A673 (cell line): ENCODE measurements at regions of chr3 and their contacts with region 1.

Region 1: GRCh38 chr3:185724251-185724650 is 100.6 kb downstream of the IGF2BP2 start:
- DNase-seq: no peak
- H3K4me3 ChIP-seq: no peak overlapping the region
- H3K27ac ChIP-seq: no peak overlapping the region
- H3K4me1 ChIP-seq: peaks cover 17% of the 10 kb centered on the region
- H3K27me3 ChIP-seq: no peaks in the 10 kb centered on the region
- CTCF ChIP-seq: no peak

Region 2: GRCh38 chr3:185200635-185201034 is 523.6 kb before region 1 on chr3:
- CTCF ChIA-PET with region 1: no interaction called
- POLR2A ChIA-PET with region 1: no interaction called
- intact Hi-C with region 1: no loop called
- DNase-seq: peak; percentile 27
- H3K4me3 ChIP-seq: no peak overlapping the region
- H3K27ac ChIP-seq: no peak overlapping the region
- H3K4me1 ChIP-seq: no peaks in the 10 kb centered on the region
- H3K27me3 ChIP-seq: no peaks in the 10 kb centered on the region
- CTCF ChIP-seq: no peak

Region 3: DNA sequence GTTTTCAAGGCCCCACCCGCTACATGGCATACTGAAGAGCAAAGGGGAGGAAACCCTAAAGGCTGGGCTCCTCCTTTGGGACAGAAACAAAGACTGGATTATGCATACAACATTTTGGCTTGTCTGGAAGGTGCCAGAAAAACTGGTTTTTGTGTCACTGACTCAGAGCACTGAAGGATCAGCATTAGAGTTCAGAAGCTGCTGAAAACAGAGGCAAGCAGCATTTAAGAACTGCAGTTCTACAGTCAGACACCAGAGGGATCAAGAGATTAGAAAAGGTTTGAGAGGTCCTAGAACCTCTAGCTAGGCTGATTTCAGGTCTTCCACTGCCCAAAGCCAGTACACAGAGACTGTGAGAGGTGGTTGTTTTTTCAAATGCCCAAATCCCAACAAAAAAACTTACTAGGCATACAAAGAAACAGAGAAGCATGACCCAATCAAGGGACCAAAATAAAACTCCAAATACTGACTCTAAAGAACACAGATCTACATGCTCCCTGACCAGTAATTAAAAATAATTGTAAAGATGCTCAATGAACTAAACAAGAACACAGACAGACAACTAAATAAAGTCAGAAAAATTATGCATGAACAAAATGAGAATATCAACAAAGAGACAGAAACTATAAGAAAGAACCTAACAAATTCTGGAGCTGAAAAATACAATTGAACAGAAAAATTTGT is 47.0 kb before region 1 on chr3:
- CTCF ChIA-PET with region 1: interaction called, 11 read pairs
- POLR2A ChIA-PET with region 1: no interaction called
- intact Hi-C with region 1: no loop called
- DNase-seq: peak; percentile 73
- H3K4me3 ChIP-seq: no peak overlapping the region
- H3K27ac ChIP-seq: no peak overlapping the region
- H3K4me1 ChIP-seq: no peaks in the 10 kb centered on the region
- H3K27me3 ChIP-seq: no peaks in the 10 kb centered on the region
- CTCF ChIP-seq: peak; percentile 75

Region 4: DNA sequence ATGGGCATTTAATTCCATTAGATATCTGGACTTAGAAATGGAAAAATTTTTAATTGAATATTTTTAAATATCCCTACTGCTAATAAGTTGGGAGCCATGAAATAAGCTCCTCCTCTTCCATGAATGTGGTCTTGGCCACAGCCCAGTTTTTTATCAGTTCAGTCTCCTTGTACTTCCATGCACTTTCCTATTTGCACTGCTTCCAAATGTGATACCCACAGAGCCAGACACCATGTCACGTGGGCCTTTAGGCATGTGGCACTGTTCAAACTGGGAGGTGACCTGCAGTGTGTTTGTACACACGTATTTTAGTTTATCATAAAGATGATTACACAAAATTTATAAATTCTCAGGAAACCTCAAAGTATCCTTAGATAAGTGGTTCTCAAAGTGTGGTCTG is 717.9 kb after region 1 on chr3:
- CTCF ChIA-PET with region 1: no interaction called
- POLR2A ChIA-PET with region 1: no interaction called
- intact Hi-C with region 1: no loop called
- DNase-seq: no peak
- H3K4me3 ChIP-seq: no peak overlapping the region
- H3K27ac ChIP-seq: no peak overlapping the region
- H3K4me1 ChIP-seq: no peaks in the 10 kb centered on the region
- H3K27me3 ChIP-seq: no peaks in the 10 kb centered on the region
- CTCF ChIP-seq: no peak